ENCODE measurements at regions of chr3 and their contacts with region 1.

Region 1: GRCh38 chr3:116254541-116254940 is 190.7 kb downstream of the LSAMP start:
- DNase-seq: no peak
- H3K4me3 ChIP-seq: no peak overlapping the region
- H3K27ac ChIP-seq: no peak overlapping the region
- H3K4me1 ChIP-seq: no peaks in the 10 kb centered on the region
- H3K27me3 ChIP-seq: no peaks in the 10 kb centered on the region
- CTCF ChIP-seq: no peak

Region 2: DNA sequence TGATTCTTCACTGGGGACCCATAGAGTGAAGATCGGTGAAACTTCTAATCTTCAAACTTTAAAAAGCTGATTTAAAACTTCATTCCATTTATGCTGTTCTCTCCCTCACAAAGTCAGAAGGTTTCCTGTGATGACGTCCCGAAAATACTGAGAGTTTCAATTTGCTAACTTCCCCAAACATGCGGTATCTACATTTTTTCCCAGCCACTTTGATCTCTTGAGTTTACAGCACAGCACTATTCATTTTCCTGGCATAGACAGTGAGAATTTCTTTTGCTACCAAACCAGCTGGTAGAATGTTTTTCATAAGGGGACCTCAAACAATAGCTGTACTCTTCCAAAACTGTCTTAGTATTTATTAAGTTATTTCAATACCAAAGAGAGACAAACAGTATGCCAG is 33.9 kb after region 1 on chr3:
- CTCF ChIA-PET with region 1: no interaction called
- POLR2A ChIA-PET with region 1: no interaction called
- intact Hi-C with region 1: no loop called
- DNase-seq: no peak
- H3K4me3 ChIP-seq: no peak overlapping the region
- H3K27ac ChIP-seq: no peak overlapping the region
- H3K4me1 ChIP-seq: no peaks in the 10 kb centered on the region
- H3K27me3 ChIP-seq: no peaks in the 10 kb centered on the region
- CTCF ChIP-seq: no peak

Region 3: GRCh38 chr3:116322750-116323375 is 68.3 kb after region 1 on chr3:
- CTCF ChIA-PET with region 1: no interaction called
- POLR2A ChIA-PET with region 1: no interaction called
- intact Hi-C with region 1: loop called (anchors 5 kb)
- DNase-seq: no peak
- H3K4me3 ChIP-seq: no peak overlapping the region
- H3K27ac ChIP-seq: no peak overlapping the region
- H3K4me1 ChIP-seq: no peaks in the 10 kb centered on the region
- H3K27me3 ChIP-seq: no peaks in the 10 kb centered on the region
- CTCF ChIP-seq: no peak